ENCODE measurements at regions of chr17 and their contacts with region 1.

Region 1: GRCh38 chr17:46770818-46771560 is 47.5 kb downstream of the WNT3 start:
- DNase-seq: no peak
- H3K4me3 Mint-ChIP-seq: peak overlapping the region; percentile 26
- H3K27ac Mint-ChIP-seq: no peak overlapping the region
- H3K4me1 Mint-ChIP-seq: peaks cover 2% of the 10 kb centered on the region
- H3K27me3 Mint-ChIP-seq: peaks cover 48% of the 10 kb centered on the region

Region 2: GRCh38 chr17:46806533-46806932 is 35.5 kb after region 1 on chr17:
- intact Hi-C with region 1: no loop called
- DNase-seq: no peak
- H3K4me3 Mint-ChIP-seq: no peak overlapping the region
- H3K27ac Mint-ChIP-seq: no peak overlapping the region
- H3K4me1 Mint-ChIP-seq: no peaks in the 10 kb centered on the region
- H3K27me3 Mint-ChIP-seq: peaks cover 2% of the 10 kb centered on the region

Region 3: DNA sequence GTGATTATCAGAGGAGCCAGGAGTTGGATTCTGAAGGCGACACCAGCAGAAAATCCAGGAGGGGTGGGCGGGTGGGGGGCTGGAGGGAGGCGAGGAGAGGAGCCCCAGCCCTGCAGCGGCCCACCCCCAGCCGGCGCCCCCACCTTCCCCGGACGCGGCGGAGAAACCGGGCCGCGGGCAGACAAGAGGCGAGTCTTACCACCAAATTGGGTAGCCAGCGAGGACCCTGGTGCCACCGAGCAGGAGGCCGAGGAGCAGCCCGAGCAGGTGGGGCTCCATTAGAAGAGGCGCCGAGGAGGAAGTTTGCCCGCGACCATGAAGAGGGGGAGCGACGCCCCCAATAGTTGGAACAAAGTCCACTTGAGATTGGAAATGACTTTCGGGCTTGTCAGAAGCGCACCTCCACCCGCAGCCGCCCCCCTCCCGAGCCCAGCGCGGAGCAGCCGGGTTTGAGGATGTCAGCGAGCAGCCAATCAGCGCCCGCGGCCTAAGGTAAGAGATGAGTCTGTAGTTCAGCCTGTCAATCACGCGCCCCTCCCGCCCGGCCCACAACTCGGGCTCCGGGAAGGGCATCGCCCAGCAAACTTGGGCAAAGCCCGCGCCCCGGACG is 47.4 kb after region 1 on chr17 and contains the start of gene WNT3:
- intact Hi-C with region 1: loop called (anchors 5 kb)
- DNase-seq: peak; percentile 46
- H3K4me3 Mint-ChIP-seq: peak within 1 kb of the TSS; percentile 64
- H3K27ac Mint-ChIP-seq: no peak within 1 kb of the TSS
- H3K4me1 Mint-ChIP-seq: peaks cover 2% of the 10 kb centered on the region
- H3K27me3 Mint-ChIP-seq: peaks cover 66% of the 10 kb centered on the region
- total RNA-seq, gene WNT3: 0.07 TPM in 1 of 2 replicates, not detected in the other

Measured in activated T-helper 2 cell treated with anti-CD3 and anti-CD28 coated beads, Interferon-gamma antibody, Interleukin-2, Interleukin-4, amounts not matched to agents 10 μg/mL and 5 μg/mL and 100 μg/mL, durations not matched to agents 14 hours and 24 hours and 36 hours (primary cell).